ENCODE measurements at regions of chr14 and their contacts with region 1.

Region 1: GRCh38 chr14:50750323-50750722 is 80.6 kb downstream of the NIN start:
- DNase-seq: no peak
- ATAC-seq: no peak
- H3K4me3 ChIP-seq: no peak overlapping the region
- H3K27ac ChIP-seq: no peak overlapping the region
- H3K4me1 ChIP-seq: no peaks in the 10 kb centered on the region
- CTCF ChIP-seq: no peak
- EP300 ChIP-seq: no peak
- POLR2A ChIP-seq: no peak
- RAD21 ChIP-seq: no peak

Region 2: GRCh38 chr14:50594577-50595316 is 155.6 kb before region 1 on chr14:
- CTCF ChIA-PET with region 1: no interaction called
- POLR2A ChIA-PET with region 1: no interaction called
- DNase-seq: no peak
- ATAC-seq: no peak
- H3K4me3 ChIP-seq: no peak overlapping the region
- H3K27ac ChIP-seq: no peak overlapping the region
- H3K4me1 ChIP-seq: 0 out of 3 replicates have a peak, but pooled peaks cover 3% of the 10 kb centered on the region
- CTCF ChIP-seq: no peak
- EP300 ChIP-seq: no peak
- POLR2A ChIP-seq: no peak
- RAD21 ChIP-seq: no peak

Region 3: DNA sequence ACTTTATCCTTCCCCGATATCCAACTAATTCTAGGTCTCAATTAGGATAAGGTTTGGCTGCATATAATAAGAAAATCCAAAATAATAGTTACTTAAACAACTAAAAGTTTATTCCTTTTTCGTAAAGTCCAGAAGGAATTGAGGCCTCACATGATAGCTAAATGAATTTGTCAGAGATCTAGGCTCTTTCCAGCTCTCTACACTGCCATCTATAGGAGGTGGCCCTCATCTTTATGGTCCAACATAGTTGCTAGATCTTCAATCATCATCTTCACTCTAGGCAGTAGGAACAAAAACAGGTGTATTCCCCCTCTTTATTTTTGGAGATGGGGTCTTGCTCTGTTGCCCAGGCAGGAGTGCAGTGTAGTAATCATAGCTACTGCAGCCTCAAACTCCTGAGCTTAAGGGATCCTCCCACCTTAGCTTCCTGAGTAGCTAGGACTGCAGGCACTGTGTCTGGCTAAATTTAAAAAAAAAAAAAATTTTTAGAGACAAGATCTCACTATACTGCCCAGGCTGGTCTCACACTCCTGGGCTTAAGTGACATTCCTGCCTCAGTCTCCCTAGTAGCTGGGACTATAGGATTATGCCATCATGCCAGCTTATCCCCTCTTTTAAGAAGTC is 35.8 kb before region 1 on chr14:
- CTCF ChIA-PET with region 1: no interaction called
- POLR2A ChIA-PET with region 1: no interaction called
- DNase-seq: peak in 1 of 2 experiments; percentile 13
- ATAC-seq: peak in 1 of 2 experiments; percentile 70; a peak in 3 of 6 replicates
- H3K4me3 ChIP-seq: no peak overlapping the region
- H3K27ac ChIP-seq: no peak overlapping the region
- H3K4me1 ChIP-seq: no peaks in the 10 kb centered on the region
- CTCF ChIP-seq: peak; percentile 26; the same call in 2 of the 3 replicates
- EP300 ChIP-seq: no peak
- POLR2A ChIP-seq: no peak
- RAD21 ChIP-seq: peak; percentile 17 to 33; a peak in 1 of 5 replicates

Region 4: DNA sequence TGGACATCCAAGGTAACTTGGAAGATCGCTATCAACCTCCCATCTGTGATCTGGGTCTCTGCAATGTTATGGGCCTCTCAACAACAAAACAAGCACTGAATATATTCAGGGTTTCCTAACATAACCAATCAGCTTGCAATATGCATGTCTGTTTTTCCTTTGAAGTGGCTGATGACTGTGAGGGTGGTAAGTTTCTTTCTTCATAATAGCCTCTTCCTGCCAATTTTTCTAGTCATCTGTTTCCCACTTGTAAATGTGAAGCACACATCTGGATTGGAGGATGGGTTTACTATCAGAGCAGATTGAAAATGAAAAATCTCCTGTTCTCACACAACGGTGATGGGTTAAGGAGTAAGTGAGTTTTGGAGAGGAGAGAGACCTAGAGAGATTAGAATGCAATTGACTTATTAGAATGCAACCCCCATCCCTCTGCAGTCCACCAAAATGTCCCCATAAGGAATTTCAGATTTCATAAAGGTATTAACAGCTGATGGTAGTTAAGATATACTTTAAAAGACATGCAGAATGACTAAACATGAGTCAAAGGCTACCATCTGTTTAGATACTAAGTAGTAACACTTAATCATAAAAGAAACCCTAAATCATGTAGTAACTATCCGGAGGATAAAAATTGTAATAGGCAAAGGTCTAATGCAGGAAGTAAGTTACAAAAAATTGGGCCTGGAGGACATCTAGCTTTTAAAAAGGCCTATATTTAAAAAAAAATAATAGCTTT is 23.8 kb before region 1 on chr14:
- CTCF ChIA-PET with region 1: no interaction called
- POLR2A ChIA-PET with region 1: no interaction called
- DNase-seq: no peak
- ATAC-seq: no peak
- H3K4me3 ChIP-seq: no peak overlapping the region
- H3K27ac ChIP-seq: no peak overlapping the region
- H3K4me1 ChIP-seq: no peaks in the 10 kb centered on the region
- CTCF ChIP-seq: no peak
- EP300 ChIP-seq: no peak
- POLR2A ChIP-seq: no peak
- RAD21 ChIP-seq: no peak

Region 5: GRCh38 chr14:50736932-50737419 is 13.3 kb before region 1 on chr14:
- CTCF ChIA-PET with region 1: interaction called, 4 read pairs
- POLR2A ChIA-PET with region 1: interaction called, 15 read pairs
- DNase-seq: no peak
- ATAC-seq: no peak; a peak in 1 of 6 replicates
- H3K4me3 ChIP-seq: no peak overlapping the region
- H3K27ac ChIP-seq: no peak overlapping the region
- H3K4me1 ChIP-seq: peaks cover 12% of the 10 kb centered on the region
- CTCF ChIP-seq: no peak
- EP300 ChIP-seq: no peak
- POLR2A ChIP-seq: no peak
- RAD21 ChIP-seq: no peak

Region 6: DNA sequence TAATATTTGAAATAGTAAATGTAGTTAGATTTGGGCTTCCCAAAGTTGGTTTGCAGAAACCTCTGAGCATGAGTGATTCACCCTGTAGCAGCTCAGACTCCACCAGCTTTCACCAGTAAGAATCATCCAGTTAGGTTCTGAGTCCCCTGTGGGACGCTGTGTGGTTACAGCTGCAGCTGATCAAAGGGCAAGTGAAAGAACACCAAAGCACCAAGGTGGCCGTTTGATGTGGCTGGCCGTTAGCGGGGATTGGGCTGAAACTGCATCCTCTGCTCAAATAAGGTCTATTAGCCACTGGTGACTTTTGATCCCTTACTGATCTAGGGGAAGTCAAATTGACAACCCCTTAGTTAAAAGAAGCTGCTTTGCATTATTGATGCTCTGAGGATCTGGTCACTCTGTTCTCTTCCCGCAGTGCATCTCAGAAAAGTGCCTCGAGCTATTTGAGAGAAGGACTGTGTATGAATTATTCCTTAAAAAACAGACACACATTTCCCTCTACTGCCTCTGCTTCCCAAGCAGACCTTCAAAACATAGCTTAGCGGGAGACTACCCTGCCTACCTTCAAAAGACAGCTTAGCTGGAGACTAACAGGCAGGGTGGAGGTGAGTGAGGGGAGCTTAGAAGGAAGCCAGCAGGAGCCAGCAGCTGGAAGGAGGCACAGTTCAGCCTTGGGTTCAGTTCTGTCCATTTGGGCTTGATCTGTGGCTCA is 125.2 kb after region 1 on chr14:
- CTCF ChIA-PET with region 1: no interaction called
- POLR2A ChIA-PET with region 1: no interaction called
- DNase-seq: no peak
- ATAC-seq: peak in 1 of 2 experiments; percentile 40; a peak in 2 of 6 replicates
- H3K4me3 ChIP-seq: no peak overlapping the region
- H3K27ac ChIP-seq: no peak overlapping the region
- H3K4me1 ChIP-seq: no peaks in the 10 kb centered on the region
- CTCF ChIP-seq: no peak
- EP300 ChIP-seq: no peak
- POLR2A ChIP-seq: no peak
- RAD21 ChIP-seq: no peak

Measured in A549 (cell line).